ENCODE measurements at regions of chr5 and their contacts with region 1.

Region 1: DNA sequence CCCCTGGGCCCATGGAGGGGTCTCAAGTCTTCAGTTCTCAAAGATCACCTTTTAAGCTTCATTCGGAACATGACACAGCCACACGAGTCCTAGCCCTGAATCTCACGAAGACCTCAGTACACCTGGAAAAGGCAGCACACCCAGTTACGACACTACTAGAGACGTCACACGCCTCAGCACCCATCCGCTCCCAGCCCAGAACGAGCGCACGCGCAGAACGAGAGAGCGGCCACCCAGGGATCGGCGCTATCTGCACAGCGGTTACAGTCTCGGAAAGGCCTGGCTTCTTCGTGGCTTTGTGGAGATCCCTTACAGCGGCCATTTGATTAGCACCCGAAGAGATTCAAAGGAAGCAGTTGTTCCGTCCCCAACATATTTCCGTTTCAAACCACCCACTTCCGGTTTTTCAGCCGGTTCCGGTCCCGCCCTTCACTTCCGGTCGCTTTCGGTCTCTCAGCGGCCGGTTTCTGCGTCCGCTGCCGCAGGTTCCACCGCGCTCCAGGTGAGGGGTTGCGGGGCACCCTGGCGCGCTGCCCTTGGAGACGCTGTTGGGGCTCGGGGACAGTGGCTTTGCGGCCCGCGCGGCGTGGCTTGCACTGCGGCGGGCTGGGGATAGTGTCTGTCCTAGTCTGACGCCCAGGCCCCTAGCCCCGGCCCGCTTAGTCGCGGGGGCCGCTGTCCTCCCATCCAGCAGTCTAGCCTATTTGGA is at the start of gene UBLCP1:
- DNase-seq: peak; percentile 86
- ATAC-seq: peak; percentile 95 to 97
- H3K4me3 ChIP-seq: peak within 1 kb of the TSS; percentile 97
- H3K27ac ChIP-seq: peak within 1 kb of the TSS; percentile 96
- H3K4me1 ChIP-seq: peaks cover 16% of the 10 kb centered on the region
- H3K27me3 ChIP-seq: no peaks in the 10 kb centered on the region
- CTCF ChIP-seq: no peak
- total RNA-seq, gene UBLCP1: 28.9 TPM

Region 2: GRCh38 chr5:159156426-159157238 is 106.4 kb before region 1 on chr5:
- intact Hi-C with region 1: loop called (anchors 10 kb)
- DNase-seq: no peak
- ATAC-seq: peak; percentile 86 to 87
- H3K4me3 ChIP-seq: no peak overlapping the region
- H3K27ac ChIP-seq: no peak overlapping the region
- H3K4me1 ChIP-seq: peaks cover 17% of the 10 kb centered on the region
- H3K27me3 ChIP-seq: no peaks in the 10 kb centered on the region
- CTCF ChIP-seq: peak; percentile 90

Region 3: DNA sequence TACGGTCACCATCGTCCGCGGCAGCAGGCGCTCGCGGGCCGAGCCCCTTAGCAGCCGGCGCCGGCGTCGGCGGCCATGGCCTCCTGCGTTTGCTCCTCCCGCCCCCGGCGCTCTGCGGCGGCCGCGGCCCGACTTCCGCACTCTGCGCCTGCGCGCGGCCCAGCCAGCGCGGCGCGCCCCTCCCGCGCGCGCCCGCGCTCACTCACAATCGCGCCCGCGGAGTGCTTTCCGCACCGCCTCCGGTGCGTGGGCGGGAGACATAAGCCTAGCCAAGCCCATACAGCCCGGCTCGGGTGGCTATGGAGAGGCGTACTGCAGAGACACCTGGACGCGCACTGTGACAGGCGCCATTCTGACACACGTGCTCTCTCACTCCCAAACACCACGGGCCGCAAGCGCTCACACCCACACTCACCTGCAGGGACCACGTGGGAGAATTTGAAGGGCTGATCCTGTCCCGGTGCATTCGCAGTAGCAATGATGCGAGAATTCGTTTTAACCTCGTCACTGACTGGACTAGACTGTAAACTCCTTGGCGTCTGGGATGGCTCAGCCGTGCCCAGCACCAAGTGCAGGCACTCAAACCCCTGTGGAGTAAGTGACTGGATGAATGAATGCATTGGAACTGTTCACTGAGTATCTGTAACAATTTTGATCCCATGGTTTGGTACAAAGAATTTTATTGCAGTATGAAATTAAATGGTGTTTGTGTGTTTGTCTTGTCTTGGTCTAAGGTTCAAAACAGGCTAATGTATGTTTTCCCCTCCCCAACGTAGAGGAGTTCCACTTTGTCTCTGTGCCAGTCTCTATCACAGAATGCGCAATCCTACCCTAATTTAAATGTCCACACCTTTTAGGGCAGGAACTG is 53.3 kb before region 1 on chr5 and contains the start of gene RNF145:
- intact Hi-C with region 1: loop called (anchors 10 kb)
- DNase-seq: peak; percentile 95
- ATAC-seq: peak; percentile 83 to 94
- H3K4me3 ChIP-seq: peak within 1 kb of the TSS; percentile 84
- H3K27ac ChIP-seq: peak within 1 kb of the TSS; percentile 93
- H3K4me1 ChIP-seq: peaks cover 44% of the 10 kb centered on the region
- H3K27me3 ChIP-seq: no peaks in the 10 kb centered on the region
- CTCF ChIP-seq: no peak
- total RNA-seq, gene RNF145: 221 TPM